Esophagus muscularis mucosa (tissue), 4 donors: ENCODE measurements at regions of chr7 and their contacts with region 1.

Region 1: DNA sequence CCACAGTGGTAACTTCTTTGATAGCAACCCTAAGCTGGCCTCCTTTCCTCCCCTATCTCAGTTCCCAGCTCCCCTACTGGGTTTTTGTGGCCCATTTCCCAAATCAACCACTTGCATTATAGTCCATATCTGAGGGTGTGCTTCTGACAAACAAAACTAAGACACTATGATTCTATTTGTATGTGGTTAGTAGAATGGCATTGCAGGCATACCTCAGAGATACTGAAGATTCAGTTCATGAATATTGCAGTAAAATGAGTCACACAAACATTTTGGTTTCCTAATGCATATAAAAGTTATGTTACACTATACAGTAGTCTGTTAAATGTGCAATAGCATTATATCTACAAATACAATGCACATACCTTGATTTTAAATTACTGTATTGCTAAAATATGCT is 15.4 kb upstream of the TMEM243 start:
- DNase-seq: no peak
- H3K4me3 ChIP-seq: no peak overlapping the region
- H3K27ac ChIP-seq: no peak overlapping the region
- H3K4me1 ChIP-seq: peaks cover 0 to 13% (median 12%) of the 10 kb centered on the region in 4 donors
- H3K27me3 ChIP-seq: no peaks in the 10 kb centered on the region
- CTCF ChIP-seq: no peak
- EP300 ChIP-seq: no peak
- POLR2A ChIP-seq: no peak

Region 2: DNA sequence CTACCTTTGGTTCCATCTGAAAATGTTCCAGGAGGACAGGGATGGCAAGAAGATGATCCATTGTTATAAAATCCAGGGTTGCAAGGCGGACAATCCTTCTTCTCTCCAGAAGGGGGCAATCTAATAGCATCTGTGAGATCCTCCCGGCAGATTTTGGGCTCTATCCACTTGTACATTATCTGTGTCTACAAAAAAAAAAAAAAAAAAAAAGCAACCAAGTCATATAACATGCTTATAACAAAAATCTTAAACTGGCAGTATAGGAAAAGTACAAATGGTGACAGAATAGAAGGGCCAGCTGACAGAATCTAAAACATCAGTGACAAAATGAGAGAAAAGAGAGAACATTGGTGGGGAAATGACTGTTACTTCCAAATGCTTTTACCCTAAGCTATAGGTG is 308.2 kb before region 1 on chr7:
- intact Hi-C with region 1: loop called (anchors 5 kb)
- DNase-seq: no peak
- H3K4me3 ChIP-seq: no peak overlapping the region
- H3K27ac ChIP-seq: no peak overlapping the region
- H3K4me1 ChIP-seq: no peaks in the 10 kb centered on the region
- H3K27me3 ChIP-seq: no peaks in the 10 kb centered on the region
- CTCF ChIP-seq: peak; percentile 59 to 72 (median 62)
- EP300 ChIP-seq: no peak
- POLR2A ChIP-seq: no peak